ENCODE measurements at regions of chr2 and their contacts with region 1.

Region 1: GRCh38 chr2:202965810-202966460 is 48.7 kb upstream of the NBEAL1 start:
- DNase-seq: peak; percentile 50 to 91 (median 62)
- ATAC-seq: peak; percentile 97
- H3K4me3 ChIP-seq: no peak overlapping the region
- H3K27ac ChIP-seq: peak overlapping the region; percentile 91
- H3K4me1 ChIP-seq: peaks cover 0 to 9% of the 10 kb centered on the region in 2 experiments; a peak in 3 of 5 replicates
- H3K27me3 ChIP-seq: no peaks in the 10 kb centered on the region
- CTCF ChIP-seq: no peak
- EP300 ChIP-seq: peak; percentile 63; the same call in 1 of the 2 replicates
- POLR2A ChIP-seq: peak; percentile 51; the same call in 1 of the 2 replicates
- RAD21 ChIP-seq: no peak

Region 2: DNA sequence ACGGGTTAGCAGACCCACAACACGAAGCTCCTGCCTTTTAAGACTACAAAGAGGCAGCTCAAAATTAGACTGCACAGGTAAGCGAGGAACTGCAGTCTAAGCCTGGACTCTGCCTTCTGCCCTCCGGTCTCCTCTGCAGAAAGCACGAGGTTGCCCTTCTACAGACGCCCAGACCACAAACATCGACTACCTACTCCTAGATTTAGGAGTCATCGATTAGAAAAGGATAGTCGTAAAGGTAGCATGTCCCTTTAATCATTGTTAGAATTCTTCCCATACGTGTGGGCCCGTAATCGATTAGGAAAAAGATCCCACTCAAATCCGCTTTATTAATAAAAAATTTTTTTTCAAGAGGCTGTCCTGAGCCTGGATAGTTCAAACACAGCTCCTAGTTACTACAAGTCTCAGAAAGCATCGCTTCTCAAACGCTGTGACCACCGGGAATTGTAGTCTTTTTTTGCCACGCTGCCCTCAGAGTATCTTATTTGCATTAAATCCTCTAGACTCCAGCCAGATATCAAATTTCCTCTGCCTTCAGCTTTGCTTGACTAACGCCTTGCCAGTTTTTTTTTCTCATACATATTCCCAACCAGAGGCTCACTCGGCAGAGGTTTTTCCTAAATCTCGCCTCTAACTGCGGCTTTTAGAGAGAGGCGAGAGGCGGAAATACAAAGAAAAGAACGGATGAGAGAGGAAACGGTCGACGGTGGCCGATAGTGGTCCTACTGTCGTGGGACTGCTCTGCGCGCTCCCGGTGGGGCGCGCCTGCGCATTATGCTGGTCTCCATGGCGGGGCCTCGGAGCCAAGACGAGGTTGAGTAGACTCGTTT is 54.2 kb before region 1 on chr2 and contains the starts of genes CARF and WDR12:
- CTCF ChIA-PET with region 1: no interaction called
- POLR2A ChIA-PET with region 1: no interaction called
- in situ Hi-C with region 1: no loop called
- intact Hi-C with region 1: loop called (anchors 5 kb)
- DNase-seq: peak; percentile 74 to 92 (median 80)
- ATAC-seq: peak; percentile 79
- H3K4me3 ChIP-seq: peak within 1 kb of the TSS; percentile 69
- H3K27ac ChIP-seq: peak within 1 kb of the TSS; percentile 93
- H3K4me1 ChIP-seq: peaks cover 0 to 5% of the 10 kb centered on the region in 2 experiments; a peak in 2 of 5 replicates
- H3K27me3 ChIP-seq: no peaks in the 10 kb centered on the region
- CTCF ChIP-seq: no peak
- EP300 ChIP-seq: no peak
- POLR2A ChIP-seq: peak; percentile 81
- RAD21 ChIP-seq: no peak
- polyA plus RNA-seq, gene CARF: 0.31 to 0.80 TPM
- polyA plus RNA-seq, gene WDR12: 498 to 554 TPM

Region 3: DNA sequence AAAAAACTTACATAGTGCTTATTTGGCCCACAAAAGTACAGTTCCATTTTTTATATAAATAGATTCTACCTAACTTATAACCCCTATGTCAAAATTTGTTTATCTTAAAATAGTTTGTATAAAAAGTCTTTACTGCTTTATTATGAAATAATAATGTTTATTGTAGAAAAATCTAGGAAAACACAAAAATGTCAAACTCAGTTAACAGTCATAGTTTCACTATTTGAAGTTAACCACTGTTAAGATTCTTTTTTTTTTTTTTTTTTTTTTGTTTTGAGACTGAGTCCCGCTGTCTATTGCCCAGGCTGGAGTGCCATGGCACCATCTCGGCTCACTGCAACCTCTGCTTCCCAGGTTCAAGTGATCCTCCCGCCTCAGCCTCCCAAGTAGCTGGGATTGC is 335.7 kb after region 1 on chr2:
- CTCF ChIA-PET with region 1: no interaction called
- POLR2A ChIA-PET with region 1: no interaction called
- in situ Hi-C with region 1: no loop called
- intact Hi-C with region 1: no loop called
- DNase-seq: no peak
- ATAC-seq: no peak
- H3K4me3 ChIP-seq: no peak overlapping the region
- H3K27ac ChIP-seq: no peak overlapping the region
- H3K4me1 ChIP-seq: no peaks in the 10 kb centered on the region
- H3K27me3 ChIP-seq: no peaks in the 10 kb centered on the region
- CTCF ChIP-seq: no peak
- EP300 ChIP-seq: no peak
- POLR2A ChIP-seq: no peak
- RAD21 ChIP-seq: no peak

Measured in K562 (cell line).